Activated B cell treated with CpG ODN at 0.5 μM for 24 hours (primary cell): ENCODE measurements at regions of chr20 and their contacts with region 1.

Region 1: DNA sequence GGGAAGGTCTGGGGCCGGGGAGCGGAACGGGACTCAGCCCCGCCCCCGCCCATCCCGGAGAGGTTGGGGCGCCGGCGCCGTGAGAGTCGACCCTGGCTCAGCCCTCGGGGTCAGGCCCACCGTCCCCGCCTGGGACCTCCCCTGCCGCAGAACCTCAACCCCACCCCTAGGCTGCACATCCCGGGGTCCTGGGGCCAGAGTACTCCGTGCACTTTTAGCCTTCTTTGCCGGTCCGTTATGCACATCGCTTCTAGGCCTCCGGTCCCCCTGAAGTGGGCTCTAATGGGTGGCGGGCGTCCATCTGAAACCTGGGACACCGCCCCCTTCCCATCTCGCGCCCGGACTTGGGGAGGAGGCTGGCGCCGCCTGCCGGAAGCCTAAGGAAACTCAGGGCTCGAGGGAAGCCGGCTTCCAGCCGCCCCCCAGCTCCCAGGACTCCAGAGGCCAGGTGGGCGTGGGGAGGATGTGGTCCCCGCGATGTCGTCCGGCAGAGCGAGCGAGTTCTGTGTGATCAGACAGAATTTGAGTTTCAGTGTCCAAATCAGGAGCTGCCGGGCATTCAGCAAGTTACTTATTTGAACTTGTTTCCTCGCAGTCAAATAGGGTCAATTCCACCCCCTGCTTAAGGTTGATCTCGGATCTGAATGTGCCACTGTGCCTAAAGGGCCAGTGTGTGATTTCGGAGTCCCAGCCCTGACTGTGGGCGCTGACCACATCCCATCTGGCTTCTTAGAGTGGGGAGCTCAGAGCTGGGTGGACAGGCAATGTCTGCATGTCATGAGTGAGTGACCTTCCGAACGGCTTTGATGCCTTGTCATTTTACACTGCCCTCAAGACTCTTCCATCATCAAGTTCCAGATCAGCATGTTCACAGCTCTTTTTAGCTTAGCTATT is 47.6 kb downstream of the CPXM1 start:
- DNase-seq: no peak
- ATAC-seq: peak; percentile 29
- H3K4me3 Mint-ChIP-seq: peak overlapping the region; percentile 68
- H3K27ac Mint-ChIP-seq: no peak overlapping the region
- H3K4me1 Mint-ChIP-seq: peaks cover 32% of the 10 kb centered on the region
- H3K27me3 Mint-ChIP-seq: peaks cover 51% of the 10 kb centered on the region
- CTCF ChIP-seq: no peak

Region 2: DNA sequence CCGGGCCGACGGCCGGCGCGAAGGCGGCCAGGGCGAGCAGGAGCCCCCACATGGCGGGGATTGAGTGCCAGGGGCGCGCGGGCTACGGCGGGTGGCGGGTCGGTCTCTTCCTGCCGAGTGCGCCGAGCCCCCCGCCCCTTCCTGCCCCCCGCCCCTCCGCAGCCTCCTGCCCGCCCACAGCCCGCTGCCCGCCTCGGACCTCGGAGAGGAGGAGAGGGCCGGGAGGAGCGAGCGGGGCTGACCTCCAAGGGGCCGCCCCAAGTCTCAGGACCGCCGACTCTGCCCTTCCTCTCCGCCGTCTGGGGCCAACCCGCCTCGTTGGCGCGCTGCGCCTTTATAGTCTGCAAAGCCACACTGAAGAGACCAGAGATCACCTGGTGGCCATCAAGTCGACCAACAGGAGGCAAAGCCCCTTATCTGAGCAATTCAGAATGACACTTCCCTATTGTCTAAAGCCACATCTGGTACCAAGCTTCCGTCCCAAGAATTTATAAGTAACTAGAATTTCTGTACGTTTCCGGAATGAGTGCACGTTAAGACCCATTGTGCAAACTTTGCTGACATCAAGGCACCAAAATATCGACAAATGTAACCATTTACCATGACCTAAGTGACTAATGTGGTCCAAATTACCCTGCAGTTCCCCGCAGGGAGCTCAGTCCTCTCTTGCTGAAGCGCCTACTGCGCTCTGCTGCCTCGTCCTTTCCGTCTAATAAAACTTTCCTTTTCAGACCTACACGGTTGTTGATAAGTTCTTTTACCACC is 47.9 kb after region 1 on chr20 and contains the start of gene CPXM1:
- CTCF ChIA-PET with region 1: no interaction called
- POLR2A ChIA-PET with region 1: no interaction called
- intact Hi-C with region 1: loop called (anchors 2 kb)
- DNase-seq: no peak
- ATAC-seq: peak; percentile 71
- H3K4me3 Mint-ChIP-seq: peak within 1 kb of the TSS; percentile 85
- H3K27ac Mint-ChIP-seq: peak within 1 kb of the TSS; percentile 77
- H3K4me1 Mint-ChIP-seq: peaks cover 31% of the 10 kb centered on the region
- H3K27me3 Mint-ChIP-seq: peaks cover 48% of the 10 kb centered on the region
- CTCF ChIP-seq: no peak
- total RNA-seq, gene CPXM1: 8.5 and 9.8 TPM in 2 replicates

Region 3: GRCh38 chr20:2849529-2849928 is 96.7 kb after region 1 on chr20:
- CTCF ChIA-PET with region 1: no interaction called
- POLR2A ChIA-PET with region 1: no interaction called
- intact Hi-C with region 1: loop called (anchors 2 kb)
- DNase-seq: no peak
- ATAC-seq: no peak
- H3K4me3 Mint-ChIP-seq: no peak overlapping the region
- H3K27ac Mint-ChIP-seq: no peak overlapping the region
- H3K4me1 Mint-ChIP-seq: peaks cover 11% of the 10 kb centered on the region
- H3K27me3 Mint-ChIP-seq: no peaks in the 10 kb centered on the region
- CTCF ChIP-seq: no peak